ENCODE measurements at regions of chr11 and their contacts with region 1.

Region 1: GRCh38 chr11:662689-663274 is 25.7 kb downstream of the DRD4 start:
- DNase-seq: peak; percentile 73 to 86 (median 81)
- ATAC-seq: peak; percentile 77 to 83 (median 78)
- H3K4me3 ChIP-seq: no peak overlapping the region
- H3K27ac ChIP-seq: no peak overlapping the region
- H3K4me1 ChIP-seq: peaks cover 0 to 32% (median 9%) of the 10 kb centered on the region in 4 donors
- H3K27me3 ChIP-seq: no peaks in the 10 kb centered on the region
- CTCF ChIP-seq: peak; percentile 67 to 87 (median 84)
- POLR2A ChIP-seq: no peak

Region 2: GRCh38 chr11:727859-728748 is 65.3 kb after region 1 on chr11:
- intact Hi-C with region 1: loop called (anchors 10 kb)
- DNase-seq: peak; percentile 85 to 86 (median 86)
- ATAC-seq: peak; percentile 90 to 92 (median 91)
- H3K4me3 ChIP-seq: no peak overlapping the region
- H3K27ac ChIP-seq: no peak overlapping the region
- H3K4me1 ChIP-seq: peaks cover 0 to 7% (median 0%) of the 10 kb centered on the region in 4 donors
- H3K27me3 ChIP-seq: no peaks in the 10 kb centered on the region
- CTCF ChIP-seq: peak; percentile 92 to 97 (median 96)
- POLR2A ChIP-seq: no peak